ENCODE measurements at regions of chr1 and their contacts with region 1.

Region 1: GRCh38 chr1:51235673-51236530 is at the start of gene RNF11:
- DNase-seq: peak; percentile 74 to 96
- H3K4me3 ChIP-seq: peak within 1 kb of the TSS; percentile 86 to 93
- H3K27ac ChIP-seq: peak within 1 kb of the TSS; percentile 96 to 97
- H3K4me1 ChIP-seq: peaks cover 0 to 19% of the 10 kb centered on the region in 2 donors
- H3K27me3 ChIP-seq: no peaks in the 10 kb centered on the region
- CTCF ChIP-seq: no peak
- total RNA-seq, gene RNF11: 56.9 TPM

Region 2: GRCh38 chr1:50852889-50853288 is 383.0 kb before region 1 on chr1:
- intact Hi-C with region 1: no loop called
- DNase-seq: no peak
- H3K4me3 ChIP-seq: no peak overlapping the region
- H3K27ac ChIP-seq: no peak overlapping the region
- H3K4me1 ChIP-seq: no peaks in the 10 kb centered on the region
- H3K27me3 ChIP-seq: no peaks in the 10 kb centered on the region
- CTCF ChIP-seq: no peak

Region 3: DNA sequence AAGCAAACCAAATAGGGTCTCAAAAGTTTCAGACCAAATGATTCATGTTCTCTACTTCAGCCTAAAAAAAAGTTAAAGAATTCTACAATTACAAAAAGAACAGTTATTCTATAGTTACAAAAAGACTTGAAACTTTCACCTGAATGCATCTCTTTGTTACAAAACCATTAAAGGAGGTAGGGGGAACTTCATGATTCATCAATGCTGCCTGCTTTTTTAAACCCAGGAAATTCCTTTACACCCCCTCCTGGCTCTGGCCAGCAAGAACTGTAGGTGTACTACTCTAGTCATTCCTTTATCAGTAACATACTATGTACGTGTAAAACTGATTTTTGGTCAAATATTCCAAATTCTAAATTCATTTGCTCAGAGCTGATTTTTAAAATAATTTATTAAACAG is 280.8 kb before region 1 on chr1:
- intact Hi-C with region 1: no loop called
- DNase-seq: no peak
- H3K4me3 ChIP-seq: no peak overlapping the region
- H3K27ac ChIP-seq: no peak overlapping the region
- H3K4me1 ChIP-seq: peaks cover 0 to 8% of the 10 kb centered on the region in 2 donors
- H3K27me3 ChIP-seq: no peaks in the 10 kb centered on the region
- CTCF ChIP-seq: no peak

Region 4: DNA sequence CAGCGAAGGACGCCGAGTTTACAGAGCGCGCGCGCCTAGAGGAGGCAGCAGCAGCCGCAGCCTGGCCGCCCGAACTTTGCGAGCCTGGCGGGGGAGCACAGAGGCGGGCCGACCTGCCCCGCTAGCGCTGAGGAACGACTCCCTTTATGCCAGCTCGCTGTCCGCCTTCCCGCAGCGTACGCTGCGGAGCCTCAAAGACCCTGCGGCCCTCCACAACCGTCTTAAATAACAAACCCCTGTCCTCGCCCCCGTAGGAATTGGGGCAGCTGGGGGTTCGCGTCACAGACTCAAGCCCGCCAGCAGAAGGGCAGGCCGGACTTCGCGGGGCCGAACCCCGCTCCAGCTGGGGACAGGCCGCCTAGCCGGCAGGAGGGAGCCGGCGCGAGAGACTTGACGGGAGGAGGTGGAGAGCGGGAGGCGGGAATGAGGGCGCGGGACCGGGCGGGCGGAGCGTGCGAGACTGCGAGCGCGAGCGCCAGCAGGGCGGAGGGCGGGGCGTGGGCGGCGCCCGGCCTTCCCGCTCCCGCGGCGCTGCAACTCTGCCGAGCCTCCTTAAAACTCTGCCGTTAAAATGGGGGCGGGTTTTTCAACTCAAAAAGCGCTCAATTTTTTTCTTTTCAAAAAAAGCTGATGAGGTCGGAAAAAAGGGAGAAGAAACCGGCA is 267.6 kb before region 1 on chr1:
- intact Hi-C with region 1: loop called (anchors 5 kb)
- DNase-seq: peak; percentile 40 to 93
- H3K4me3 ChIP-seq: peak overlapping the region; percentile 80 to 93
- H3K27ac ChIP-seq: peak overlapping the region; percentile 95 to 98
- H3K4me1 ChIP-seq: no peaks in the 10 kb centered on the region
- H3K27me3 ChIP-seq: no peaks in the 10 kb centered on the region
- CTCF ChIP-seq: peak; percentile 5 to 57 (median 38)

Region 5: GRCh38 chr1:51192213-51192843 is 43.6 kb before region 1 on chr1:
- intact Hi-C with region 1: loop called (anchors 2 kb)
- DNase-seq: peak in 1 of 2 donors; percentile 80
- H3K4me3 ChIP-seq: no peak overlapping the region
- H3K27ac ChIP-seq: no peak overlapping the region
- H3K4me1 ChIP-seq: no peaks in the 10 kb centered on the region
- H3K27me3 ChIP-seq: no peaks in the 10 kb centered on the region
- CTCF ChIP-seq: peak; percentile 40 to 89 (median 85)

Region 6: GRCh38 chr1:51247022-51247421 is 11.1 kb after region 1 on chr1:
- intact Hi-C with region 1: no loop called
- DNase-seq: no peak
- H3K4me3 ChIP-seq: no peak overlapping the region
- H3K27ac ChIP-seq: no peak overlapping the region
- H3K4me1 ChIP-seq: peaks cover 0 to 21% of the 10 kb centered on the region in 2 donors
- H3K27me3 ChIP-seq: no peaks in the 10 kb centered on the region
- CTCF ChIP-seq: no peak

Region 7: GRCh38 chr1:51264451-51264850 is 28.5 kb after region 1 on chr1:
- intact Hi-C with region 1: loop called (anchors 1 kb)
- DNase-seq: peak in 1 of 2 donors; percentile 71
- H3K4me3 ChIP-seq: peak overlapping the region; percentile 23 to 39
- H3K27ac ChIP-seq: peak overlapping the region; percentile 80 to 81
- H3K4me1 ChIP-seq: peaks cover 13 to 78% of the 10 kb centered on the region in 2 donors
- H3K27me3 ChIP-seq: no peaks in the 10 kb centered on the region
- CTCF ChIP-seq: no peak

Region 8: GRCh38 chr1:51284487-51284954 is 48.6 kb after region 1 on chr1:
- intact Hi-C with region 1: loop called (anchors 5 kb)
- DNase-seq: peak in 1 of 2 donors; percentile 57
- H3K4me3 ChIP-seq: no peak overlapping the region
- H3K27ac ChIP-seq: peak overlapping the region in 1 of 2 donors; percentile 17
- H3K4me1 ChIP-seq: peaks cover 9 to 12% of the 10 kb centered on the region in 2 donors
- H3K27me3 ChIP-seq: no peaks in the 10 kb centered on the region
- CTCF ChIP-seq: no peak

Region 9: GRCh38 chr1:51296383-51297357 is 60.8 kb after region 1 on chr1:
- intact Hi-C with region 1: loop called (anchors 2 kb)
- DNase-seq: peak in 1 of 2 donors; percentile 91
- H3K4me3 ChIP-seq: peak overlapping the region; percentile 57 to 71
- H3K27ac ChIP-seq: peak overlapping the region; percentile 14 to 43
- H3K4me1 ChIP-seq: peaks cover 0 to 5% of the 10 kb centered on the region in 2 donors
- H3K27me3 ChIP-seq: no peaks in the 10 kb centered on the region
- CTCF ChIP-seq: peak; percentile 89 to 99 (median 99)

Region 10: DNA sequence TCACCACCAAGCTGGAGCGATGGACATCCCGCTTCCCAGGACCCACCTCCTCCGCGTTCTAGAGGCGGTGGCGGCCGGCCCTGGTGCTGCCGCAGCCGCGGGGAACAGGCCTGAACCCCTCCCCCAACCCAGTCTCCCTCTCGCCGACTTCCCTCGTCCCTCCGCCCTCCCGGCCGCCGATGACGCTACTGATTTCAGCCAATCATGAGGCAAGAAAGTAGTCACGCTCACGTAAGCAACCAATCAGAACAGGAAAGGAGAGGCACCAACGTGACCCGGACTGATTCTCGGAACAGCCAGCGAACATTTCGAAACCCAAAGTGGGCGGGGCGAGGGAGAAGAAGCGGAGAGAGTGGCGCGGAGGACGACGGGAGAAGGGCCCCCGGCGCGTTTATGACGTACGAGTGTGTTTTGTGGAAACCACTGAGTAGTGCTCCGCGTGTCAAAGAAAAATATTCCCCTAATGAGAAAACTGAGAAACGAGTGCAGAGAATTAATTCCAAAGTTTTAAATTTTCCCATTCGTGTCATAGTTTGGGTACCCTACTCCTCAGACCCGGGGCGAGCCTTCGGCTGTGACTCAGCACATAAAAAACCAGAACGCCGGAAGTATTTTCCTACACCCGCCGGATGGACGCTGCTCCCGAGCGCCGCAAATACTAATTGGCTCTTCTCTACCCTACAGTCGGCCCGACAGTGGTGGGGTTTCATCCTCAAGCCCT is 642.9 kb after region 1 on chr1 and contains the start of gene NRDC:
- intact Hi-C with region 1: loop called (anchors 5 kb)
- DNase-seq: peak; percentile 99 to 100
- H3K4me3 ChIP-seq: peak within 1 kb of the TSS; percentile 71 to 83
- H3K27ac ChIP-seq: peak within 1 kb of the TSS; percentile 94 to 99
- H3K4me1 ChIP-seq: peaks cover 5 to 27% of the 10 kb centered on the region in 2 donors
- H3K27me3 ChIP-seq: no peaks in the 10 kb centered on the region
- CTCF ChIP-seq: no peak
- total RNA-seq, gene NRDC: 40.0 TPM